Calu3 (cell line): ENCODE measurements at regions of chr4 and their contacts with region 1.

Region 1: GRCh38 chr4:74545488-74545887 is 100.6 kb downstream of the AREG start:
- DNase-seq: peak; percentile 38
- H3K4me3 Mint-ChIP-seq: no peak overlapping the region
- H3K27ac Mint-ChIP-seq: no peak overlapping the region
- H3K4me1 Mint-ChIP-seq: peaks cover 12% of the 10 kb centered on the region
- H3K27me3 Mint-ChIP-seq: no peaks in the 10 kb centered on the region
- CTCF ChIP-seq: no peak

Region 2: GRCh38 chr4:74583077-74583693 is 37.7 kb after region 1 on chr4:
- CTCF ChIA-PET with region 1: no interaction called
- intact Hi-C with region 1: loop called (anchors 5 kb)
- DNase-seq: no peak
- H3K4me3 Mint-ChIP-seq: no peak overlapping the region
- H3K27ac Mint-ChIP-seq: peak overlapping the region; percentile 36
- H3K4me1 Mint-ChIP-seq: peaks cover 37% of the 10 kb centered on the region
- H3K27me3 Mint-ChIP-seq: no peaks in the 10 kb centered on the region
- CTCF ChIP-seq: no peak